Posterior cingulate gyrus (tissue), 11 donors: ENCODE measurements at regions of chr4 and their contacts with region 1.

Region 1: DNA sequence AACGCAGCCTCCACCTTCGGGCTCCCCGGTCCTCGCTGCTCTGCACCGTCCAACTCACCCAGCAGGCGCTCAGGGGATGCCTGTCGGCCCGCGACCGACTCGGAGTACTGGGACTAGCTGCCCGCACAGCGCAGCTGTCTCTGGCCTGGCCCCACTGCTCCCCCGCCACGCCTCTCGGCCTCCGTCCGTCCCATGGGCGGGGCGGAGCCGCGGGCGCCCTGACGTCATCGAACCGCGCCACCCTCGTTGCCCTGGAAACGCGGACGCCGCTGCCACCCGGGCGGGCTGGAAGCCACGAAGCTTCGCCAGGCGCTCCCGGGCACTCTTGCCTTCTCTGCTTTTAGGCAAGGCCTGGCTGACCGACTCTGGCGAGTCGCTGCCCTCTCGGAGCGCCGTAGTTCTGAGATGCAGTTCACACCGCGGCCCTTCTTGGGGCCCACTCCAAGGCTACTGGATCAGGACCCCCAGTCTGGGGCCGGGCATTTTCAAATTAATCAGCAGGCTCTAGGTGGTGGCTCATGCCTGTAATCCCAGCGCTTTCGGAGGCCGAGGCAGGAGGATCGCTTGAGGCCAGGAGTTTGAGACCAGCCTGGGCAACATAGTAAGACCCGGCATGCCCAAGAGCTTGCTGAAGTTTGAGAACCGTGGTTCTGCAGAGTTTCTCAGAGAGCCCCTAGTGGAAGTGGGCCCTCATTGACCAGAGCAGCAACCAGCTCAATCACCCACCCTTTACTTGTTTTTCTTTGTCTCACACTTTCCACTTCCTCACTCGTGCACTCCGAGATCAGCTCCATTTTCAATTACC is 12.0 kb downstream of the ACOX3 start:
- DNase-seq: peak; percentile 79 to 98 (median 91)

Region 2: DNA sequence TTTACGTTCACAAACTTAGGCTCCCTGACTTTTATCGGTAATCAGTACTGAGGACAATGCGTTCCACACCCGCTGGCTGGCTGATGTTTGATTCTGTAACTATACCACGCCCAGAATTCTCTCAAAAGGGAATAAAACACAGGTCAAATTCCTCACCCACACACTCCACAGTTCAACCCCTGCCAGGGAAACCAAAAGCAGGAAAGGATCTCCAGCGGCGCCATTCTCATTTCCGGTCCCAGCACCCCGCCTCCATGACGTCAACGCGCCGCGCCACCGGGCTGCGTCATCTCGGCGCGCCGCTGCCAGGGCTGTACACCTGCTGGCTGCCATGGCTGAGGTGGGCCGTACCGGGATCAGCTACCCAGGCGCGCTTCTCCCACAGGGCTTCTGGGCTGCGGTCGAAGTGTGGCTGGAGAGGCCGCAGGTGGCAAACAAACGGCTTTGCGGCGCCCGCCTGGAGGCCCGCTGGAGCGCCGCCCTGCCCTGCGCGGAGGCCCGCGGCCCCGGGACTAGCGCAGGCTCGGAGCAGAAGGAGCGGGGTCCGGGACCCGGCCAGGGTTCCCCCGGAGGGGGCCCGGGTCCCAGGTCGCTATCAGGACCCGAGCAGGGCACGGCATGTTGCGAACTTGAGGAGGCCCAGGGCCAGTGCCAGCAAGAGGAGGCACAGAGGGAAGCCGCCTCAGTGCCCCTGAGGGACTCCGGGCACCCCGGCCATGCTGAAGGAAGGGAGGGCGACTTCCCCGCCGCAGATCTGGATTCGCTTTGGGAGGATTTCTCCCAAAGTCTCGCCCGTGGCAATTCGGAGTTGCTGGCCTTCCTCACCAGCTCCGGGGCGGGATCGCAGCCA is 12.2 kb after region 1 on chr4 and contains the starts of genes ACOX3 and TRMT44:
- intact Hi-C with region 1: loop called (anchors 1 kb)
- DNase-seq: peak; percentile 85 to 99 (median 92)

Region 3: DNA sequence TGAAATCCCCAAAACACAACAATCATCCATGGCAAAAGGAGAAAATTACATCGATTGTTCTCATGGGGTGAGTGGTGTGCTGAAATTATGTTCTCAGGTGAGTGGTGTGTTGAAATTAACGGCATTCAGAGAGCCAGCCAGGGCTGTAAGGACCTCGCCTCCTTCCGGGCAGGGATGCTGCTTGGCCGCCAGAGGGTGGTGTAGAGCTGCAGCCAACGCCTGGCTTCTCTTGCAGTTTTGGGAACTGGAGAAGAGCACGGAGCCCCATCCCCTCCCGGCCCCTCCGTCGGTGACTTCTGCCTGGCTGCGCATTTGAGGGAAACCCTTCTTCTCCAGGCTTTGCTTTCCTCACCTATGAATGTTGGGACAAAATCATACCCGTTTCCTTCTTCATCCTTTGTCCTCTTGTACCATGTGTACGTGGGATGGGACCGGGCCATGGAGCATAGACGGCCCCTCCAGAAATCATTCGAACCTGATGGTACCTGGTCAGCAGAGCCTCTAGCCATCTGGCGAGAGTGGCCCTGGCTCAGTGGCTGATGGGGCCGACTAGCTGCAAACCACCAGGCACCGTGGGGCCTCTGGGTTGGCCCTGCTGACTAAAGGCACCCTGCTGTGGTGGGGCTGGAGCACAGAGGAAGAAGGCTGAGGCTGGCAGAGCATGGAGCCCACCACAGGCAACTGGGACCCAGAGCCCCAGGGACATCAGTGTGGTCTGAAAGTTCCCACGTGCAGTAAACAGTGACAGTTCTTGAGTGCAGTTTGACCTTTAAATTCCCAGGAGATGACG is 40.4 kb after region 1 on chr4:
- intact Hi-C with region 1: no loop called
- DNase-seq: peak; percentile 56 to 95 (median 74)

Region 4: DNA sequence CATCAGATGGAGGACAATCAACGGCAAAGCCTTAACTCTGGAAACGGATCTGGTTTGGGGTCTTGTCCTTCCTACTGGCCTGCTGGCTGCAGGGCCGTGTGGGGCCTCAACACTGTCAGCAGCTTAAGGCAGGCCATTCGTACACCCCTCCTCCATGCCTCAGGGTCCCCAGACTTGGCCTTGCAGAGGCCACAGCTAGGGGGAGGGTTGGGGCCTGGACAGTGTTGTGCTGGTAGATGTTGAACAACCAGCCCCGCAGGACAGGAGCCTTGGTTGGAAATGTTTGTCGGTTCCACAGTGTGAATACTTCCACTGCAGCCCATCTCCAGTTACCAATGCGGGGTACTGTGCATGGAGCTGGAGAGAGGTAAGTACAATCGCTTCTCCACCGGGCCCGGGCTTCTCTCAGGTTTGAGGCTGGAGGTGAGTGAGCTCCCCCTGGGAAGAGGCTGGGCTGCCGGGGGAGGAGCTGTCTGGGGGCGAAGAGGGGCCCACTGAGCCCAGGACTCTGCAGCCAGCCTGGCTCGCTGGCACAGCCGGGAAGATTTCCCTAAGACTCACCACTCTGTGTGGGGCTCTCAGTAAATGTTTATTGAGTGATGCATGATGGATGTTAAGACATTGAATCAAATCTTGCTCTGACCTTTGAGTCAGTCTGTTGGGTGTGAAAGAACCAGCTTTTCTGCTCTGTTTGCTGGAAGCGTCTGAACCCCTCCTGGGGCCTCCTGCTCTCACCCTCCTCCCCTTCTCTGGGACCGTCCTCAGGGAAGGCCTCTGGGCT is 132.0 kb after region 1 on chr4:
- intact Hi-C with region 1: no loop called
- DNase-seq: peak in 3 of 10 donors; percentile 20 to 66 (median 27)